PC-3 (cell line): ENCODE measurements at regions of chr1 and their contacts with region 1.

Region 1: GRCh38 chr1:40383488-40384412 is 10.2 kb downstream of the SMAP2 start:
- DNase-seq: peak; percentile 89
- ATAC-seq: peak; percentile 61
- H3K4me3 ChIP-seq: peak overlapping the region; percentile 55
- H3K27ac ChIP-seq: peak overlapping the region; percentile 99
- H3K4me1 ChIP-seq: peaks cover 71% of the 10 kb centered on the region
- H3K27me3 ChIP-seq: no peaks in the 10 kb centered on the region
- CTCF ChIP-seq: no peak

Region 2: GRCh38 chr1:40266786-40267535 is 116.8 kb before region 1 on chr1:
- CTCF ChIA-PET with region 1: no interaction called
- POLR2A ChIA-PET with region 1: interaction called, 11 read pairs
- intact Hi-C with region 1: no loop called
- DNase-seq: no peak
- ATAC-seq: no peak
- H3K4me3 ChIP-seq: no peak overlapping the region
- H3K27ac ChIP-seq: peak overlapping the region; percentile 34
- H3K4me1 ChIP-seq: peaks cover 14% of the 10 kb centered on the region
- H3K27me3 ChIP-seq: no peaks in the 10 kb centered on the region
- CTCF ChIP-seq: no peak

Region 3: DNA sequence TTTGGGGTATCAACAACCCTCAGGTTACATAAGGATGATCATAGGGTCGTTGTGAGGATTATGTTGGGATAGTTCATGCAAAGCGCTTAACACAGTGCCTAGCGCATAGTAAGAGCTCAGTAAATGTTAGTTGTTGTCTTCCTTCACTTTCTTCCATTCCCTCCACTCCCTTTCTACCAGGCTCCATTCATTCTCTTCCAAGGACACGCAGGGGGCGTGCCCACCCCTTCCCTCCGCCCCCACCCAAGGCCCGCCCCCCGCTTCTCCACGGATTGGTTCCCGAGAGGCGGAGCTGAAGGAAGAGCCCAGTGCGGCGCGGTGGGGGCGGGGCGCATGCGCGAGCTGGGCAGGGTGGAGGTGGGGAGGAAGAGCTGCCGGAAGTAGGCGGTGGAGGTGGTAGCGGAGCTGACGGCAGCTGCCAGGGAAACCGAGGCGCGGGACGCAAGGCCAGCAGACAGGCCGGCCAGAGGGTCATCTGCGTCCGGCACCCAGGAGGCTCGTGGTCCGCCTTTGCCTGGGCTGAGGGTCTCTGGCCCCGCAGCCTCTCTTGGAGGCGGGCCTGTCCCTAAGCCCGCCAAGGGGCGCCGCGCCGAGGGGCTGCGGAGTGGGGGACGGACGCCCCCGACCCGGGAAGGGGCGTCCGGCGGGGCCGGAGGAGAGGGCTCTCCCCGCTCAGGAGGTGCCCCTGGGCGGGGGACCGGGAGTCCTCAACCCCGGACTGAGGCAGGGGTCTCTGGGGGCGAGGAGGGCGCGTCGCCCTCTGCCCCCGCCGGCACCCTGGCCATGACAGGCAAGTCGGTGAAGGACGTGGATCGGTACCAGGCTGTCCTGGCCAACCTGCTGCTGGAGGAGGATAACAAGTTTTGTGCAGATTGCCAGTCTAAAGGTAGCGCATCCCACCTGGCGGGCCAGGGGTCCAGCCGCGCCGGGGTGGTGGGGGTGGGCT is 10.1 kb before region 1 on chr1 and contains the start of gene SMAP2:
- CTCF ChIA-PET with region 1: no interaction called
- POLR2A ChIA-PET with region 1: no interaction called
- intact Hi-C with region 1: loop called (anchors 1 kb)
- DNase-seq: peak; percentile 96
- ATAC-seq: peak; percentile 81
- H3K4me3 ChIP-seq: peak within 1 kb of the TSS; percentile 81
- H3K27ac ChIP-seq: peak within 1 kb of the TSS; percentile 92
- H3K4me1 ChIP-seq: peaks cover 27% of the 10 kb centered on the region
- H3K27me3 ChIP-seq: no peaks in the 10 kb centered on the region
- CTCF ChIP-seq: no peak
- total RNA-seq, gene SMAP2: 48.1 and 51.0 TPM in 2 replicates

Region 4: GRCh38 chr1:40691538-40692428 is 308.0 kb after region 1 on chr1 and contains the start of gene NFYC:
- CTCF ChIA-PET with region 1: no interaction called
- POLR2A ChIA-PET with region 1: no interaction called
- intact Hi-C with region 1: no loop called
- DNase-seq: peak; percentile 99
- ATAC-seq: peak; percentile 86
- H3K4me3 ChIP-seq: peak within 1 kb of the TSS; percentile 92
- H3K27ac ChIP-seq: peak within 1 kb of the TSS; percentile 95
- H3K4me1 ChIP-seq: peaks cover 32% of the 10 kb centered on the region
- H3K27me3 ChIP-seq: no peaks in the 10 kb centered on the region
- CTCF ChIP-seq: no peak
- total RNA-seq, gene NFYC: 49.4 and 52.6 TPM in 2 replicates